Esophagus muscularis mucosa (tissue), 4 donors: ENCODE measurements at regions of chr1 and their contacts with region 1.

Region 1: GRCh38 chr1:59879574-59879973 is 47.0 kb downstream of the CYP2J2 start:
- DNase-seq: no peak
- H3K4me3 ChIP-seq: no peak overlapping the region
- H3K27ac ChIP-seq: no peak overlapping the region
- H3K4me1 ChIP-seq: no peaks in the 10 kb centered on the region
- H3K27me3 ChIP-seq: no peaks in the 10 kb centered on the region
- CTCF ChIP-seq: peak; percentile 32 to 51 (median 45)
- EP300 ChIP-seq: no peak
- POLR2A ChIP-seq: no peak

Region 2: GRCh38 chr1:59947047-59947938 is 67.7 kb after region 1 on chr1:
- intact Hi-C with region 1: loop called (anchors 2 kb)
- DNase-seq: no peak
- H3K4me3 ChIP-seq: no peak overlapping the region
- H3K27ac ChIP-seq: no peak overlapping the region
- H3K4me1 ChIP-seq: peaks cover 0 to 4% (median 1%) of the 10 kb centered on the region in 4 donors
- H3K27me3 ChIP-seq: no peaks in the 10 kb centered on the region
- CTCF ChIP-seq: peak; percentile 81 to 92 (median 85)
- EP300 ChIP-seq: no peak
- POLR2A ChIP-seq: no peak